CD8-positive, alpha-beta T cell (primary cell): ENCODE measurements at regions of chr1 and their contacts with region 1.

Region 1: DNA sequence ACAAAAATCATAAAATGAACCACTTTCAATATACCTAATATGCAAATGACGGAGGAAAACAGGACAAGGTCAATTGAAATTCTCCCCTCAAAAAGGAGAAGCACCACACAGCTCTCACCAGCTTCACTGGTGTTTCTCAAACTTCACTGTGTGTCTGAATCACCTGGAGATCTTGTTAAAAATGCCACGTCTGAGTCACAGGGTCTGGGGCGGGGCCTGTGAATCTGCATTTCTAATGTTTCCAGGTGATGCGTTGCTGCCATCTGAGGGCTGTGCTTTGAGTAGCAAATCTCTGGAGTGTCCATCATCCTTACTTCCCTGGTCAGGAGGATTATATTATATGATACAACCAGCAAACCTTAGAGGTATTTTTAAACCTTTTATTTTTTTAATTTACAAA is 9.0 kb downstream of the CLDN19 start:
- DNase-seq: peak in 3 of 9 experiments; percentile 29 to 47 (median 34)
- ATAC-seq: no peak
- H3K4me3 ChIP-seq: no peak overlapping the region
- H3K4me3 Mint-ChIP-seq: no peak overlapping the region
- H3K27ac ChIP-seq: no peak overlapping the region
- H3K27ac Mint-ChIP-seq: no peak overlapping the region
- H3K4me1 ChIP-seq: no peaks in the 10 kb centered on the region
- H3K4me1 Mint-ChIP-seq: no peaks in the 10 kb centered on the region
- H3K27me3 ChIP-seq: no peaks in the 10 kb centered on the region
- H3K27me3 Mint-ChIP-seq: no peaks in the 10 kb centered on the region
- CTCF ChIP-seq: no peak

Region 2: GRCh38 chr1:42576935-42577334 is 154.1 kb before region 1 on chr1:
- CTCF ChIA-PET with region 1: no interaction called
- POLR2A ChIA-PET with region 1: no interaction called
- intact Hi-C with region 1: loop called in 1 of 2 experiments (anchors 2 kb)
- DNase-seq: no peak
- ATAC-seq: no peak
- H3K4me3 ChIP-seq: no peak overlapping the region
- H3K4me3 Mint-ChIP-seq: no peak overlapping the region
- H3K27ac ChIP-seq: no peak overlapping the region
- H3K27ac Mint-ChIP-seq: no peak overlapping the region
- H3K4me1 ChIP-seq: no peaks in the 10 kb centered on the region
- H3K4me1 Mint-ChIP-seq: no peaks in the 10 kb centered on the region
- H3K27me3 ChIP-seq: no peaks in the 10 kb centered on the region
- H3K27me3 Mint-ChIP-seq: no peaks in the 10 kb centered on the region
- CTCF ChIP-seq: no peak

Region 3: DNA sequence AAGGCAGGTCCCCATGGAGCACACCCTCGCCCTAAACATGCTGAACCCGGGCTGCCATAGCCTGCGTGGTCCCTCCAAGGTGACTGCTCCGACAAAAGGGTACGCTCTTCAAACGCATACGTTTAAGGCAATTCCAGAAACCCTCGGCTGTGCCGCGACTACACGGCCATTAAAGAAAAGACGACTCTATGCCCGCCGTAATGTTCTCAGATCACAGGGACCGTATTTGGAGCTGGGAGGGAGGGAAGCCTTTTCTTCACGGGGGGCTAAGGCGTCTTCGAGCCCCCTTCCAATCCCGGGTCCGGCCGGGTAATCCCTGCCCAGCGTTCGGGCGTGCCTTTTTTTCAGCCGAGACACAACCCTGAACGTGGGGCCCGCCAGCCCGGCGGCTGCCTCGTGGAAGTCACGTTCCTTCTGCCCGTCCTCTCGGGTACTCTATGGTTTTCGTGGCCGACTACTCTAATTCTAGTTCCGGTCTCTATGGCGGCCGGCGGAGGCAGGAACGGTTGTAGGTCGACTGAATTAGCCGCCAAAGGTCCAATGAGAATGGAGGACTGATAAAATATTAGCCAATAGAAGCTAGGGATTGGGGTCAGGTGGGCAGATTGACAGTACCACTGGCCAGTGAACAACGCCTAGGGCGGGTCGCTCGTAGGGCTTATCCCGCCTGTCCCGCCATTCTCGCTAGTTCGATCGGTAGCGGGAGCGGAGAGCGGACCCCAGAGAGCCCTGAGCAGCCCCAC is 49.1 kb before region 1 on chr1 and contains the start of gene YBX1:
- CTCF ChIA-PET with region 1: no interaction called
- POLR2A ChIA-PET with region 1: no interaction called
- intact Hi-C with region 1: no loop called
- DNase-seq: peak; percentile 88 to 98 (median 95)
- ATAC-seq: peak; percentile 89
- H3K4me3 ChIP-seq: peak within 1 kb of the TSS; percentile 81 to 84
- H3K4me3 Mint-ChIP-seq: peak within 1 kb of the TSS; percentile 99
- H3K27ac ChIP-seq: peak within 1 kb of the TSS; percentile 82 to 88
- H3K27ac Mint-ChIP-seq: peak within 1 kb of the TSS; percentile 97
- H3K4me1 ChIP-seq: peaks cover 43% of the 10 kb centered on the region
- H3K4me1 Mint-ChIP-seq: peaks cover 58% of the 10 kb centered on the region
- H3K27me3 ChIP-seq: no peaks in the 10 kb centered on the region
- H3K27me3 Mint-ChIP-seq: no peaks in the 10 kb centered on the region
- CTCF ChIP-seq: no peak
- total RNA-seq, gene YBX1: 440 to 450 TPM

Region 4: DNA sequence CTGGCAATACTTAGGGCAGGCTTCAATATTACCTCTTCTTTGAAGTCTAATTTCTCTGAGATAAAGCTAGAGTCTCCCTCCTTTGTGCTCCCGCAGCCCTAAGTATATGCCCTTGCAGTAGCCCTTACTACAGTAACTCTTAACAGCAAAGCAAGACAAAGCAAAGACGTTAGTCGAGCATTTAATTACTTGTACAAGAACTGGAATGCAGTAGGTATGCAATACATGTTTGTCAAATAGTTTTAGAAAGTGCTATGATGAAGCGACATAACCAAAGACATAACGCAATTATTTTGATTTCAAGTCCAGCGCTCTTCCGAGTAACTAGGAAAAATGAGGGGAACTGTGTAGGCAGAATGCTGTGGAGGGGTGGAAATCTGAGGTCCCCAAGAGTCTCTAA is 34.3 kb after region 1 on chr1:
- CTCF ChIA-PET with region 1: no interaction called
- POLR2A ChIA-PET with region 1: no interaction called
- intact Hi-C with region 1: no loop called
- DNase-seq: no peak
- ATAC-seq: no peak
- H3K4me3 ChIP-seq: peak overlapping the region; percentile 73 to 97
- H3K4me3 Mint-ChIP-seq: no peak overlapping the region
- H3K27ac ChIP-seq: no peak overlapping the region
- H3K27ac Mint-ChIP-seq: no peak overlapping the region
- H3K4me1 ChIP-seq: peaks cover 34% of the 10 kb centered on the region
- H3K4me1 Mint-ChIP-seq: peaks cover 29% of the 10 kb centered on the region
- H3K27me3 ChIP-seq: no peaks in the 10 kb centered on the region
- H3K27me3 Mint-ChIP-seq: no peaks in the 10 kb centered on the region
- CTCF ChIP-seq: no peak